PC-3 (cell line): ENCODE measurements at regions of chr4 and their contacts with region 1.

Region 1: DNA sequence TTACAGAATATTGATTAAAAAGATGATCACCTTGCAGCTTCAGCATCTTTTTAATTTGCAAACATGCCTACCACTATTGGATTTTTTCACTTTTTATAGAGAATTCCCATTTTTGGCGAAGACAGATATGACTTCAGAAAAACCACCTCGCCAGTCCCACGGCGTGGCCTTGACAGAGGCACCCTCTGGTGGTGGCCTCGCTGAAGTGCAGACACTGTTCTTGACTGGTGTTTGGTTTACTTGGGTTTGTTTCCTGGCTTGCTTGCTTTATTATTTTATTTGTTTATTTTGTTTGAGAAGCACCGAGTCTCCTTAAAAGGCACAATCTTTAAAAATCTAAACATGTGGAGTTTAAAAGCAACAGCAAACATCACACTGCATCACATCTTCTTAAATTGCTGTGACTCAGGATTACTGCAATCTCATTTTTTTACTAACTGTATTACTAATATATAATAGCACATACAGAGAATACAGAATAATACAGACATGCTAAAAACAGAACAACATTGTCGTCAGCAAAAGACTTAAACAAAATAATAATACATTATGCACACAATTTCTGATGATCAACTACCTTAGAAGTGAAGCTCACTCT is 13.1 kb upstream of the AMTN start:
- DNase-seq: peak; percentile 81
- ATAC-seq: peak; percentile 88
- H3K4me3 ChIP-seq: no peak overlapping the region
- H3K27ac ChIP-seq: no peak overlapping the region
- H3K4me1 ChIP-seq: no peaks in the 10 kb centered on the region
- H3K27me3 ChIP-seq: peaks cover 37% of the 10 kb centered on the region
- CTCF ChIP-seq: peak; percentile 98

Region 2: GRCh38 chr4:70315928-70316327 is 189.3 kb before region 1 on chr4:
- CTCF ChIA-PET with region 1: no interaction called
- POLR2A ChIA-PET with region 1: no interaction called
- intact Hi-C with region 1: loop called (anchors 2 kb)
- DNase-seq: peak; percentile 21
- ATAC-seq: no peak
- H3K4me3 ChIP-seq: no peak overlapping the region
- H3K27ac ChIP-seq: no peak overlapping the region
- H3K4me1 ChIP-seq: no peaks in the 10 kb centered on the region
- H3K27me3 ChIP-seq: peaks cover 7% of the 10 kb centered on the region; the same call in 1 of the 2 replicates
- CTCF ChIP-seq: peak; percentile 27; the same call in 1 of the 2 replicates

Region 3: GRCh38 chr4:70442474-70442873 is 62.8 kb before region 1 on chr4:
- CTCF ChIA-PET with region 1: no interaction called
- POLR2A ChIA-PET with region 1: no interaction called
- intact Hi-C with region 1: no loop called
- DNase-seq: no peak
- ATAC-seq: no peak
- H3K4me3 ChIP-seq: no peak overlapping the region
- H3K27ac ChIP-seq: no peak overlapping the region
- H3K4me1 ChIP-seq: no peaks in the 10 kb centered on the region
- H3K27me3 ChIP-seq: peaks cover 31% of the 10 kb centered on the region
- CTCF ChIP-seq: no peak

Region 4: GRCh38 chr4:70559211-70559830 is 54.1 kb after region 1 on chr4:
- CTCF ChIA-PET with region 1: interaction called, 3 read pairs
- POLR2A ChIA-PET with region 1: no interaction called
- intact Hi-C with region 1: loop called (anchors 2 kb)
- DNase-seq: peak; percentile 79
- ATAC-seq: peak; percentile 82
- H3K4me3 ChIP-seq: no peak overlapping the region
- H3K27ac ChIP-seq: no peak overlapping the region
- H3K4me1 ChIP-seq: no peaks in the 10 kb centered on the region
- H3K27me3 ChIP-seq: peaks cover 18% of the 10 kb centered on the region
- CTCF ChIP-seq: peak; percentile 96